Sigmoid colon (tissue), 7 donors: ENCODE measurements at regions of chr10 and their contacts with region 1.

Region 1: DNA sequence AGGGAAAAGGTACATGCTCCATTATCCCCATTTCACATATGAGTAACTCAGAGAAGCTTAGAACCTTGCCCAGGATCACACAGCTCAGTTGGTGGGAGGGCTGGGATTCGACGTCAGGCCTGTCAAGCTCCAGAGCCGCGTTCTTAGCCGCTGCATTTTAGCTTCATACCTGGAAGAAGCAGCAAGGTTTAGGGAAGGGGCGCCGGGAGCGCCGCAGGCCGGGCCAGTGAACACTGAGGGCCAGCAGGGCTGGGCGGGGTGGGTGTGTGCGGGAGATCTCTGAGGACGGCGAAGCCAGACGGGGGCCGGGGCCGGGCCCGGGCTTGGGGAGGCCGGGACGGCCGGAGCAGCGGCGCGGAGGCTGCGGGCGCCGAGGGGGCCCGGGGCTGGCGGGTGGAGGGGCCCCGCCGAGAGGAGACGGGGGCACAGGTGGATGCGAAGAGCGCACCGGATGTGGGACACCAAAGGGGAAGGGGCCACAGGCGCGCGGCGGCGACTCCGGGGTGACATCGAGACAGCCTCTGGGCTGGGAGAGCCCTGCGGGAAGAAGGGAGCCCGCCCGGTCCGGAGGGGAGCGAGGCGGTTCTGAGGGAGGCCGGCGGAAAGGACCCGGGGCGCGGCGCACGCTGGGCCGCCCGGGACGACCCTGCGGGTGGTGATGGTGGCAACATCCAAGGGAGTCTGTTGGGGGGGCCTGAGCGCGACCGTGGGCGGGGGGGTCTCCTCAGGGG is 498 bp downstream of the NDST2 start:
- DNase-seq: no peak
- H3K4me3 ChIP-seq: peak overlapping the region; percentile 61 to 98 (median 84)
- H3K27ac ChIP-seq: peak overlapping the region; percentile 89 to 99 (median 95)
- H3K4me1 ChIP-seq: peaks cover 0 to 39% (median 26%) of the 10 kb centered on the region in 4 donors
- H3K27me3 ChIP-seq: no peaks in the 10 kb centered on the region
- CTCF ChIP-seq: no peak
- EP300 ChIP-seq: no peak
- POLR2A ChIP-seq: no peak

Region 2: DNA sequence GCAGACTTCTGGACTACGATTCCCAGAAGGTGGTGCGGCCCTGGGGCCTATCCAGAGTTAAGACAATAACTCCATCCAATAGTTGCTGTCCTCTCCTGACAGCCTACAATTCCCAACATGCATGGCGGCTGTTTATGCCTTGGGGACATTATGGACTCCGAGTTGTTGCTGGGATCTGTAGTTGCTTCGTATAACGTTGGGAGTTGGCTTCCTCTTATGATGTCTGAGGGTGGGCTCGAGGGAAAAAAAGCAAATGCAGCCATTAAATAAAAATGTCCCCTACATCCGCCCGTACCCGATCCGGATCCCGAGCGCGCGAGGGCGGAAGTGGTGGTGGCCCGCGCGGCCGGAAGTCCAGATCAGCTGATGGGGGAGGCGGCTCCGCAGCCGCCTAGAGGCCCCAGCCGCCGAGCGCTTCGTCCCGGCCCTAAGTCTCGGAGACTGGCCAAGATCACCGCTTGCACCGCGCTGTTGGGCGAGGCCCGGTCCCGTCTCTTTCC is 25.6 kb before region 1 on chr10 and contains the start of gene ZSWIM8:
- intact Hi-C with region 1: loop called (anchors 2 kb)
- DNase-seq: peak; percentile 95
- H3K4me3 ChIP-seq: peak within 1 kb of the TSS; percentile 70 to 96 (median 80)
- H3K27ac ChIP-seq: peak within 1 kb of the TSS; percentile 88 to 97 (median 90)
- H3K4me1 ChIP-seq: peaks cover 0 to 60% (median 58%) of the 10 kb centered on the region in 4 donors
- H3K27me3 ChIP-seq: no peaks in the 10 kb centered on the region
- CTCF ChIP-seq: no peak
- EP300 ChIP-seq: peak in 1 of 4 donors; percentile 33
- POLR2A ChIP-seq: peak; percentile 57 to 76
- total RNA-seq, gene ZSWIM8: 42.5 to 138 (median 71.9) TPM